ENCODE measurements at regions of chr1 and their contacts with region 1.

Region 1: GRCh38 chr1:89022167-89022959 is at the start of gene GBP3:
- DNase-seq: peak; percentile 42

Region 2: DNA sequence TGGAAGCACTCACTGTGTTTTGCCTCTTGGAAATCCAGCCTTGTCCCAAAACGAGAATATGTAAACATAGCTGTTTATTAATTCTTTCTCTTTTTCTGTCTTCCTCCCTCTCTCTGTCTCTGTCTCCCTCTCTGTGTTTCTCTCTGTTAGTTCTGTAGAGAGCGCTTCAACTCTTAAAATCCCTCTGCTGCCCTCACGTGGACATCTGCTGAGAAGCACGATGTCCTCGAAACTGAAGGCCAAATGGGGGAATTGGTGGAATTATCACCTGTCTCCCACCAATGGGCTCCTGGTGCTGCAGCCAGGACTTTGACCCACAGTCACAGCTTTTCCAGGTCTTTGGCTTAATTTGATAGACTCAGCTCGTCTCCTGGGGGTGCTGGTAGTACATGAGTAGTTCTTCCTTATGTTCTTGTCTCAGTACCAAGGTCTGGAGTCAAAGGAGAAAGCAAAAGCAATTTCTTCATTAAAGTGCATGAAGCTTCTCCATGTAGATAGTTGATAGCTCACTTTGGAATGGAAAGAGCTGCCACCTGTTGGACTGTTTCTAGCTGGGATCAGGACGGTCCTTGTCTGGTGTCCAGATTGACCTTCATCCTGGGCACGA is 336.0 kb after region 1 on chr1:
- in situ Hi-C with region 1: loop called (anchors 25 kb)
- DNase-seq: peak; percentile 69

Region 3: GRCh38 chr1:89615676-89616598 is 593.6 kb after region 1 on chr1:
- in situ Hi-C with region 1: loop called (anchors 25 kb)
- DNase-seq: peak; percentile 34

Measured in KBM-7 (cell line).